Calu3 (cell line): ENCODE measurements at regions of chr7 and their contacts with region 1.

Region 1: DNA sequence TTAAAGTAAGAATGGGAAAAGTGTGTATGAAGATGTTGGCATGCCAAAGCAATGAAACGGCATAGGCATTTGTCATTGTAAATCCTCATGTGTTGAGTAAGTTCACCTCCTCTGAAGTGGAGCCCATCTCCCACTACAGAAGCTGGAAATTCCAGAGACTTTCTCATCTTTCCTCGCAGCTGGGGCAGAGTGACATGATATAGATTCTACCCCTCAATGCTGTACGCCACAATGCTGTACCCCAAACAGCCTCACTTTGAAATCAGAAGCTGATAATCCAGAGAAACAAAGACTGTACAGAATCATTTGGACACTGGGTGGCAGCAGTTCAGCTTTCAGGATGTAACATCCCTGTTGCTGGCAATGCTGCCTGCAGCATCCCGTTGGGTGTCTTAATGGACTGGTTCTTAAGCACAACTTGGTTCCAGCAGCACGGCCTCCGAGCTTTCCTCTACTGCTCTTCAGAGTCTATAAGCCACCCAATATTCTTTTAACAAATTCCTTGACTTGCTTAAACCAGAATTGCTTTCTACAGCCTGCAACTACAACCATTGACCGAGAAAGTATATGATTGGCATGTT is 18.8 kb downstream of the ZC3HAV1L start:
- DNase-seq: peak; percentile 58
- H3K4me3 Mint-ChIP-seq: no peak overlapping the region
- H3K27ac Mint-ChIP-seq: no peak overlapping the region
- H3K4me1 Mint-ChIP-seq: no peaks in the 10 kb centered on the region
- H3K27me3 Mint-ChIP-seq: peaks cover 28% of the 10 kb centered on the region
- CTCF ChIP-seq: peak; percentile 54

Region 2: GRCh38 chr7:138935465-138936011 is 81.5 kb before region 1 on chr7:
- CTCF ChIA-PET with region 1: no interaction called
- intact Hi-C with region 1: no loop called
- DNase-seq: peak; percentile 47
- H3K4me3 Mint-ChIP-seq: no peak overlapping the region
- H3K27ac Mint-ChIP-seq: no peak overlapping the region
- H3K4me1 Mint-ChIP-seq: peaks cover 17% of the 10 kb centered on the region
- H3K27me3 Mint-ChIP-seq: no peaks in the 10 kb centered on the region
- CTCF ChIP-seq: no peak

Region 3: DNA sequence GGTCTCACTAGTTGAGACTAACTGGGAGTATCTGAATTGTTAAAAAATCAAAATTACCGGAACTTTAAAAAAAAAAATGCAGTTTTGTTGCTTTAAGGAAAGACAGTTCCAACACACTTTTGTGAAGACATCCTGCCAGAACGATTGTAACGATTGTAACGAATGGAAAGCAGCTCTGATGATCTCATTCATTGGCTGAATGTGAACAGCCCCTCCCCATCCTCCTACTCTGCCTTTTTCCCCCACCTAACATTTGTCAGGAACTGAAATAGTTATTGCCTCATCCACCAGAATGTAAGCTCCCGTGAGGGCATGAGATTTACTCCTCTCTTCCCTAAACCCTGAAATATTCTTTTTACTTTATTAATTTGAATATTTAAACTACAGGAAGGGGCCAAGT is 41.9 kb after region 1 on chr7:
- CTCF ChIA-PET with region 1: no interaction called
- intact Hi-C with region 1: no loop called
- DNase-seq: no peak
- H3K4me3 Mint-ChIP-seq: no peak overlapping the region
- H3K27ac Mint-ChIP-seq: no peak overlapping the region
- H3K4me1 Mint-ChIP-seq: no peaks in the 10 kb centered on the region
- H3K27me3 Mint-ChIP-seq: no peaks in the 10 kb centered on the region
- CTCF ChIP-seq: no peak

Region 4: DNA sequence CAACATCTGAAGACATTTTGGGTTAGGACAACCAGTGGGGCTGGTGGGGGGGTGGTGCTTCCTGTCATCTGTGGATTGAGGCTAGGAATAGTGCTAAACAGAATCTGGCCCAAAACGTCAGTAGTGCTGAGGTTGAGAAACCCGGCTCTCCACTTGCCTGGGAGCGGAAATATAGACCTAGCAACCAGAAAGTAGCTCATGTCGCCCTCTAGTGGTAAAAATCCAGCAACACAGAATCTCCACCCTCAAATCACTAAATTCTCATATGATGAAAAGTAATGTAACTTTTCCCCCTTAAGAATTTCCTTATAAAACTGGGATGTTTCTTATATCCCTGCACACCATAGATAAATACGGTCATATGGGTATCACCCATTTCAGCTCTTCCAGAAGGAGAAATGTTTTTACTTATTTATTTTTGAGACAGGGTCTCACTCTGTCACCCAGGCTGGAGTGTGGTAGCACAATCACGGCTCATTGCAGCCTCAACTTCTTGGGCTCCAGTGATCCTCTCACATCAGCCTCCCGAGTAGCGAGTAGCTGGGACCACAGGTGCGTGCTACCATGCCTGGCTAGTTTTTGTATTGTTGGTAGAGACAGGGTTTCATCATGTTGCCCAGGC is 58.1 kb after region 1 on chr7:
- CTCF ChIA-PET with region 1: interaction called, 10 read pairs
- intact Hi-C with region 1: loop called (anchors 5 kb)
- DNase-seq: peak; percentile 65
- H3K4me3 Mint-ChIP-seq: no peak overlapping the region
- H3K27ac Mint-ChIP-seq: no peak overlapping the region
- H3K4me1 Mint-ChIP-seq: no peaks in the 10 kb centered on the region
- H3K27me3 Mint-ChIP-seq: no peaks in the 10 kb centered on the region
- CTCF ChIP-seq: no peak

Region 5: GRCh38 chr7:139127648-139128047 is 110.6 kb after region 1 on chr7:
- CTCF ChIA-PET with region 1: no interaction called
- intact Hi-C with region 1: loop called (anchors 1 kb)
- DNase-seq: no peak
- H3K4me3 Mint-ChIP-seq: no peak overlapping the region
- H3K27ac Mint-ChIP-seq: no peak overlapping the region
- H3K4me1 Mint-ChIP-seq: peaks cover 23% of the 10 kb centered on the region
- H3K27me3 Mint-ChIP-seq: peaks cover 13% of the 10 kb centered on the region
- CTCF ChIP-seq: no peak

Region 6: GRCh38 chr7:139534966-139535651 is 518.1 kb after region 1 on chr7:
- CTCF ChIA-PET with region 1: no interaction called
- intact Hi-C with region 1: no loop called
- DNase-seq: no peak
- H3K4me3 Mint-ChIP-seq: no peak overlapping the region
- H3K27ac Mint-ChIP-seq: no peak overlapping the region
- H3K4me1 Mint-ChIP-seq: no peaks in the 10 kb centered on the region
- H3K27me3 Mint-ChIP-seq: peaks cover 84% of the 10 kb centered on the region
- CTCF ChIP-seq: no peak

Region 7: DNA sequence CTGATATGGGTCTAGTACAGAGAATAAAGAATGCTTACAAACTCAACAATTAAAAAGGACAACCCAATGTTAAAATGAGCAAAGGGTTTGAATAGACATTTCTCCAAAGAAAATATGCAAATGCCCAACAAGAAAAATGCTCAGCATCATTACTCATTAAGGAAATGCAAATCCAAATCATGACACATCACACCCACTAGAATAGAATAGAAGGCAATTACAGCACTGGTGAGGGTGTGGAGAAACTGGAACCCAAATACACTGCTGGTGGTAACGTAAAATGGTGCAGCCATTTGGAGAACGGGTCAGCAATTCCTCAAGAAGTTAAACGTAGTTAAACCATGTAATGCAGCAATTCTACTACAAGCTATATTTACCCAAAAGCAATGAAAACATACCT is 1105.9 kb after region 1 on chr7:
- CTCF ChIA-PET with region 1: no interaction called
- intact Hi-C with region 1: no loop called
- DNase-seq: no peak
- H3K4me3 Mint-ChIP-seq: no peak overlapping the region
- H3K27ac Mint-ChIP-seq: no peak overlapping the region
- H3K4me1 Mint-ChIP-seq: no peaks in the 10 kb centered on the region
- H3K27me3 Mint-ChIP-seq: no peaks in the 10 kb centered on the region
- CTCF ChIP-seq: no peak